Activated naive CD4-positive, alpha-beta T cell treated with anti-CD3 and anti-CD28 coated beads for 36 hours (primary cell): ENCODE measurements at regions of chr5 and their contacts with region 1.

Region 1: DNA sequence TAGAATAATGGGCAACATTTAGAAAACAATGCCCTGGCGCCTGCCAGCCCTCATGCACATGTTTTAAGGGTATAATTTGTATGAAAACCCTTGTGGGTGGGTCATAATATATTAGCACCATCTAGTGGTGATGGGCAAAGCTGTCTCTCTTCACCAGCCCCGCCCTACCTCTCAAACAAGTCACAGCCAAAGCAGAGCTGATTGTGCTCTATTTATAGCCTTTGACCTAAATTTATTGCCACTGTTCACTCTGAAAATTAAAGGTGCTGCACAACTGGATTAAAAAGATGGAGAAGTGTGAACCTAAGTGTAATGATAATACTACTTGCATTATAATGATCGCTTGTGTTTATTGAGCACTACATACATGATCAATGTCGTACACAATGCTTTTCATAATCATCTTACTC is 131.9 kb upstream of the ANKH start:
- DNase-seq: peak; percentile 70
- H3K4me3 Mint-ChIP-seq: no peak overlapping the region
- H3K27ac Mint-ChIP-seq: no peak overlapping the region
- H3K4me1 Mint-ChIP-seq: no peaks in the 10 kb centered on the region
- H3K27me3 Mint-ChIP-seq: no peaks in the 10 kb centered on the region

Region 2: DNA sequence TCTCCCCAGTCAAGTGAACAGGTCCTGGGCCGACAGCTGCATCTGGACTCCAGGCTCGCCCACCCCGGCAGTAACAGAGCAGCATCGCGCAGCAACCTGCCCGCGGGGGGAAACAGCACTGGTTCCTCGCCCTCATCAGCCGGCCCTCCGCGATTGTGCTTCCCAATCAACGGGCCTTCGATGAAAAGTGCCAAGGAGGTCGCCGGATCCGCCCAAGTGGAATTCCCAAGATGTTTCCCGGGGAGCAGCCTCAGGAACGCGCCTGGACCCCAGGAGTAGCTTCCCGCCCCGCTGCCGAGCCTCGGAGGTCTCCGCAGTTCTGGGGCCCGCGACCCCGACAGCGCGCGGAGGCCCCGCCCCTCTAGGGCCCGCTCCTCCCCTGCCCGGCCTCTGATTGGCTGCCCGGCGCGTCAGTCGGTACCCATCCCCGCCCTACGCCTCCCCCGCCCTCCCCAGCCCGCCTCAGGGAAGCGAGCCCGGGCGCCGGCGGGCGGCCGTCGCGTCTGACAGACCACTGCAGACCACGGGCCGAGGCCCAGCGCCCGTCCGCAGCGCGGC is 422.1 kb before region 1 on chr5 and contains the start of gene OTULINL:
- CTCF ChIA-PET with region 1: no interaction called
- intact Hi-C with region 1: loop called (anchors 5 kb)
- DNase-seq: peak; percentile 91
- H3K4me3 Mint-ChIP-seq: peak within 1 kb of the TSS; percentile 75
- H3K27ac Mint-ChIP-seq: peak within 1 kb of the TSS; percentile 70
- H3K4me1 Mint-ChIP-seq: peaks cover 26% of the 10 kb centered on the region
- H3K27me3 Mint-ChIP-seq: peaks cover 2% of the 10 kb centered on the region
- total RNA-seq, gene OTULINL: 9.1 to 10.6 TPM

Region 3: GRCh38 chr5:14720236-14720971 is 283.1 kb before region 1 on chr5:
- CTCF ChIA-PET with region 1: interaction called, 165 read pairs
- intact Hi-C with region 1: no loop called
- DNase-seq: no peak
- H3K4me3 Mint-ChIP-seq: no peak overlapping the region
- H3K27ac Mint-ChIP-seq: no peak overlapping the region
- H3K4me1 Mint-ChIP-seq: peaks cover 51% of the 10 kb centered on the region
- H3K27me3 Mint-ChIP-seq: no peaks in the 10 kb centered on the region

Region 4: DNA sequence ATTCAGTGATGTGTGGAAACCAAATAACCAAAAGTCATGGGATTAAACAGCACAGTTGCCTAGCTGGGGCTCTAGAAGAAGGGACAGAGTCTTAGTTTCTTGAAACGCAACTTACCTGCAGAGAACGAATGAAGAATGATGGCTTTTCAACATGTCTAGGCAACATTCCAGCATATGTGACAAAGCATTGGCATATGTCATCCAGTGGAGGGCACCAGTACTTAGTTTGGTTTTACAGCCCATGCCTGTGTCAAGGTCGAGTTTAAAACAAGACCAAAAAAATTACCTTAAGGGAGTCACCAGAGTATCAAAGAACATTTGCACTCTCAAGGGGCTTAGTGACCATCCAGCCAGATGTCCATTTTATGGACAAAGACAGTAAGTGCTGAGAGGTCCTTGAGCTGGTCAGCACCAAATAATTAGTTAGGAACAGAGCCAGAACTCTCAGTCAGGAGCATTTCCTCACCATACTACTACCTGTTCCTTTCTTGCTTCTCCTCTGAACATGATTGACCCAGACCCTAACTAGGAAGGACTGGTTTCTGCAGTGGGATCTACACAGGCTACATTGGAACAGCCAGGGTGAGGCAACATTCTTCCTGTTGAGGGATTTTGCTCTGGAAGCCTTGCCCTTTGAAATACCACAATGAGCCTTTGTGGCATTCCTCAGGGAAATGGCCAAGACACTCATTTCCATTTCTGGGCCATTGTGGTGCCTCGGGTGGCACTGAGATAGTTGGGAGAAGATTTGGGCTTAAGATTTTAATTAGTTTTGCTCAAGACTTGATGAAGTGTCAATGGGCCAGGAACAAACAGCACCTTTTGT is 56.5 kb before region 1 on chr5:
- CTCF ChIA-PET with region 1: interaction called, 6 read pairs
- intact Hi-C with region 1: loop called (anchors 1 kb)
- DNase-seq: peak; percentile 59
- H3K4me3 Mint-ChIP-seq: no peak overlapping the region
- H3K27ac Mint-ChIP-seq: peak overlapping the region; percentile 62
- H3K4me1 Mint-ChIP-seq: peaks cover 21% of the 10 kb centered on the region
- H3K27me3 Mint-ChIP-seq: no peaks in the 10 kb centered on the region

Region 5: DNA sequence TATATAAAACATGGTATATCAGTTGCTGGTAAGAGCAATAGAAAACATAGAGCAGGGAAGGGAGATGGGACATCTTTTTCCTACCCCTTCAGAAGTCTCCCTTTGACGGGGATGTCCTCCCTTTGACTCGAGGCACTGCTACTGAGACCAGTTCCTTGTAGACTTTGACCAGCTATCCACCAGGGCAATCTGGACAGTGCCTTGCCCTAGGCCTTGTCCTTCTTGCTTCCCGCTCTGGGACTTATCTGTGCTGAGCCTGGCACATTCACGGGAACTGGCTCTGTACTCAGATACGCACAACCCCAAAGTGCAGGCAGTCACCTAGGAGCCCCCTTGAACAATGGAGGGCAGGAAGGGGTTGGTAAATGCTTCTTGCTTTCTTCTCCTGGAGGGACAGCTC is 15.3 kb before region 1 on chr5:
- CTCF ChIA-PET with region 1: interaction called, 13 read pairs
- intact Hi-C with region 1: no loop called
- DNase-seq: no peak
- H3K4me3 Mint-ChIP-seq: no peak overlapping the region
- H3K27ac Mint-ChIP-seq: no peak overlapping the region
- H3K4me1 Mint-ChIP-seq: peaks cover 35% of the 10 kb centered on the region
- H3K27me3 Mint-ChIP-seq: no peaks in the 10 kb centered on the region

Region 6: DNA sequence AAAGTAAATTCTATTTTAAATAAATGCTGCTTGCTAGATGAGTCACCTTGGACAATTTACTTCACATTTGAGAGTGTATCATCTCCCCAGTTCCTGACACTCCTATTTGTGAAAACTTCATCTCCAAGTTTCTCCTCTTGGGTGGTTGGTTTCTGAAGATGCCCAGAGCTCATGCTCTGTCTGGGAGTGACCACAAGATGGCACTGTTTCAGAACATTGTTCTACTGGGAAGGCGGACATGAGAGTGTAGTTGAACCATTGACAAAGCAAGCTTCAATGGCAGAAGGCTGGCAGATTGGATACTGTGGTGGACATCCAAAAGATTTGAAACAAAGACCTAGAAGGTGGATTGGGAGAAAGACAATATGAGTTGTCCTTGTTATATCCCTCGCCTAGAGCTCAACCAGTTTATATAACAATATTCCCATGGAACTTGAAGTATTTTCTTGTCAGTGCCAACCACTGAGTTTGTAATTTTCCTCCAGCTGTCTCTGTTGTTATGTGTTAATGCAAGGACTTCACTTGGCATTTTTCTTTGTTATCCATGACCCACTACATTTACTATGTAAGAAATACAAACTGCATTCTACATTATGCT is 102.4 kb after region 1 on chr5:
- CTCF ChIA-PET with region 1: no interaction called
- intact Hi-C with region 1: no loop called
- DNase-seq: peak; percentile 56
- H3K4me3 Mint-ChIP-seq: no peak overlapping the region
- H3K27ac Mint-ChIP-seq: no peak overlapping the region
- H3K4me1 Mint-ChIP-seq: peaks cover 4% of the 10 kb centered on the region
- H3K27me3 Mint-ChIP-seq: no peaks in the 10 kb centered on the region

Region 7: DNA sequence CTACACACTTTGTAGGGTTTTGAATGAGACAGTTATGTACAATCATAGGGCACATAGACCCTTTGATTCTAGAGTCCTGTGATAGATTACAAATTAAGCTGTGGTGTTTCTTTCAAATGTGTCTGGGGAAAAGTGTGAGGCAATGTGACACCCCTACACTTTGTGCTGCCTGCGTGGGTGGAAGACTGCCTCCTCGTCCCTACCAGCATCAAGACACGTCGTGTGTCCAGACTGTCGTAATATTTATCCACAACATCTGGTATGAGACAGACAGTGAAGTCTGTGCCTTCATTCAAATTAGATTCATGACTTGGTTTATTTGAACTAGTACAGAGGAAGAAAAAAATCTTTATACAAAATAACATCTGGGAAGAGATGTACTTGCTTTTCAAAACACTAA is 148.1 kb after region 1 on chr5:
- CTCF ChIA-PET with region 1: no interaction called
- intact Hi-C with region 1: no loop called
- DNase-seq: no peak
- H3K4me3 Mint-ChIP-seq: no peak overlapping the region
- H3K27ac Mint-ChIP-seq: no peak overlapping the region
- H3K4me1 Mint-ChIP-seq: no peaks in the 10 kb centered on the region
- H3K27me3 Mint-ChIP-seq: no peaks in the 10 kb centered on the region

Region 8: DNA sequence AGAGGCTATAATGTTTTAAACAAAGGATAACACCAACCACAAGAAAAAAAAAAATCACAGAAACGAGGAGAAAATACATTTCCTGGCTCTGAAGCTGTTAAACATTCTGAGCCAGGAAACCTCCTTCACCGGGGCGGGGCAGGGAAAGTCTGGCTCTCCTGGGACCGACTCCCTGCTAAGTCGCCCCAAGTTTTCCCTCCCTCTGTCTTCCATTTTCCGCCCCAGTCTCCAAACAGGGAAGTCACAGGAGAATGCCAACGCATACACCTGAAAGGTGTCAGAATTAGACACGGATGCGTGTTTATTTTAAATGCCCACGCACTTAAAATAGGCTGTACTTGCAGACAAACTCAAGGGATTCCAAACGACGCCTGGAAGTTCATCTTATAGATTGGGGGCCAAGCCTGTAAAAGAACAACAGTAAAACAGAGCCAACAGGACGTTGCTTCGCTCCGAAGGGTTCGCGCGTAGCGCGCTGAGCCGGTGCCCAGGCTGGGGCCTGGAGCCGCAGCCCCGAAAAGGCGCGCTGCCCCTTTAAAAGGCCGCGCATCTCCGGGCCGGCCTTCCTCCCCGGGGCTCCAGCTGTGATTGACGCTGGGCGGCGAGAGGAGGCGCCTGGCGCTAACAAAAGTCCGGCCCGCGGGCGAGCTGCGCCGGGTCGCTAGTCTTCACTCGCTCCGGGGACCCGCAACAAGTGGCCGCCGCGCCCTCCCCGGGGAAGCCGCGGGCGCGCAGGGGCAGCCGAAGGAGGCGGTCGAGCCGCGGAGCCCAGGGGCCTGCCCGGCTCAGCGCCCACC is 496.2 kb after region 1 on chr5 and contains the start of gene FBXL7:
- CTCF ChIA-PET with region 1: no interaction called
- intact Hi-C with region 1: no loop called
- DNase-seq: no peak
- H3K4me3 Mint-ChIP-seq: no peak within 1 kb of the TSS
- H3K27ac Mint-ChIP-seq: no peak within 1 kb of the TSS
- H3K4me1 Mint-ChIP-seq: no peaks in the 10 kb centered on the region
- H3K27me3 Mint-ChIP-seq: peaks cover 38% of the 10 kb centered on the region
- total RNA-seq, gene FBXL7: not detected